Dendritic cell treated with granulocyte-macrophage colony-stimulating factor and Interleukin-4, amounts not matched to agents 40 ng/mL and 50 ng/mL, for 4 days (primary cell): ENCODE measurements at regions of chr17 and their contacts with region 1.

Region 1: GRCh38 chr17:73657473-73658116 is 13.3 kb upstream of the SDK2 start:
- H3K4me3 Mint-ChIP-seq: no peak overlapping the region
- H3K27ac Mint-ChIP-seq: no peak overlapping the region
- H3K4me1 Mint-ChIP-seq: peaks cover 21% of the 10 kb centered on the region
- H3K27me3 Mint-ChIP-seq: peaks cover 6% of the 10 kb centered on the region

Region 2: DNA sequence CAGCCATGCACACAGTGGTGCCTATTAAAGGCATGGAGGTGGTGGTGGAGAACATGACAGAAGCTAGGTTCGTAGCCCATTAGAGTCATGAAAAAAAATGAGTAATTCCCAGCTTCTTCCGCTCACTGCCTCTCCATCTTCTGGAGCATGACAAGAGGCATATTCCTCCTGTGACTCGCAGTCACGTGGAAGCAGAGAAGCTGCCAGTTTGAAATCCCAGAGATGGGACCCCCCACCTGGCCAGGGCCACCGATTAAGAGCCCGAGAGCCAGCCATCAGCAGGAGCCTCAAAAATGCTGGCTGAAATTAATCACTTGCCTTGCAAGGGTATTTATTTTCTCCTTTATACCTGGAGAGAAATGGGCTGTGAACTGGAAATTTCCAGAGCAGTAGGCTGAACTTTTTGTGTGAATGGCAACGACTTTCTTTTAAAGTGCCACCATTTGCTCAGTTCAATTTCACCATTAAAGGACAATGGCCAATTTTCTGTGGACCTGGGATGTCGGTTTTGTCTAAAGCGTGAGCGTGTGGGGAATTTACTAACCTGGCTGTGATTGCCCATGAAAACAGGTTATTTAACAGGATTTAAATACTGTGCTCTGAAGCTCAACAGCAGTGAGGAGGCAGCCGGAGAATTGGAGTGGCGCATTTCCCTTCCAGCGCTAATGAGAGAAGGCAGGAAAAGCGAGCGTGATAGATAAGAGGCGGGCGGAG is 176.3 kb after region 1 on chr17:
- intact Hi-C with region 1: loop called (anchors 10 kb)
- H3K4me3 Mint-ChIP-seq: no peak overlapping the region
- H3K27ac Mint-ChIP-seq: no peak overlapping the region
- H3K4me1 Mint-ChIP-seq: no peaks in the 10 kb centered on the region
- H3K27me3 Mint-ChIP-seq: peaks cover 24% of the 10 kb centered on the region

Region 3: DNA sequence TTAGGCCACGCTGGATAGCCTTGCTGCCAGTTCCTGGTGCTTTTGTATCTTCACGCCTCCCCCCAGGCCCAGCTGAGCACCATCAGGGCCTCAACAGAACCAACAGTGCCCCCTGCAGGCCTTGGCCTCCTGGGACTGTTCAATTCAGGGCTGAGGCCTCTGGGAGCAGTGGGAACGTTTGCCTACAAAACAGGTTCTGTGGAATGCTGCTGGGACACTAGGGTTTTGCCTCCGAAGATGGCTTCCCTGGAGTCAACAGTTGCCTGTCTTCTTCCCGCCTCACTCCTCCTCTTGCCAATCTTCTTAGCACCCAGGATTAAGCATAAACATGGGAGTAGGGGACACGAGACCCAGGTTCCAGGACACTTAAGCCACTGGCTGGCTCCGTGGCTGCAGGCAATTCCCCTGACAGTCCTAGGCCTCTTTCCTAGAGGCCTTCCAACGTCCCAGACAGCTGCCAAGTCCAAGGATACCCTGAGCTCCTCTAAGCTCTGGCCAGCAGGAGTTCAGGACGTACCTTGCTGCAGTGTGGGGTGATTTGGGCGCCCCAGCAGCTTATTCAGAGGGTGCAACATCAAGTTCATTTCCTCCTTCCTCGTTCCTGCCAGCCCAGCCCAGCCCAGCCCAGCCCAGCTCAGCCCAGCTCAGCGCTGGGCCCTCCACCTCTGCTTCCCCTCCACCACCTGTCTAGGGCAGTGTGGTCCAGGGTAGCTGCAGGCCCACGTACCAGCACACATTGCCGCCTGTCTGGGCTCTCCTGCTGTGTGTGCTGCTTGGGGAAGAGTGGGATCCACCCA is 299.3 kb after region 1 on chr17:
- intact Hi-C with region 1: loop called (anchors 2 kb)
- H3K4me3 Mint-ChIP-seq: no peak overlapping the region
- H3K27ac Mint-ChIP-seq: no peak overlapping the region
- H3K4me1 Mint-ChIP-seq: peaks cover 5% of the 10 kb centered on the region
- H3K27me3 Mint-ChIP-seq: peaks cover 2% of the 10 kb centered on the region

Region 4: DNA sequence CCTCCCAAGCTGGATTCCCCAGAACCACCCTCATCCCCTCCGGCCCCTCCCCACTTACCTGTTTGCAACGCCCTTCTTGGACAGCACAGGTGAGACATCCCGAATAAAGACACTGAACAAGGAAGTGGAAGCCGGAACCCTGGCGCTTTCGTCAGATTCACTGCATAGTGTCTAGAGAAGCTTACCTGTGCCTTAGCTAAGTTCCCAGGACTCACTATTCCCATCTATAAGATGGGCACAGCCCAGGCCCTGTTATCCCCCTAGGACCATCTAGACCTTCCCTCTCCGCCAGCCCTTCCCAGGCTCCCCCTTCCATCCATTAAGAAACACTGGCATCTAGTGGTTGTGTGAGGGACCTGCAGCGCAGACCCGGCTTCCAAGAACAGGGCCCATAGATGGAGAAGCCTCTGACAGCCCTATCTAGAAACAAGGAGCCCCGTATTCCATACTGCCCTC is 519.0 kb after region 1 on chr17:
- intact Hi-C with region 1: loop called (anchors 10 kb)
- H3K4me3 Mint-ChIP-seq: no peak overlapping the region
- H3K27ac Mint-ChIP-seq: no peak overlapping the region
- H3K4me1 Mint-ChIP-seq: peaks cover 10% of the 10 kb centered on the region
- H3K27me3 Mint-ChIP-seq: peaks cover 37% of the 10 kb centered on the region